ENCODE measurements at regions of chr2 and their contacts with region 1.

Region 1: GRCh38 chr2:20650880-20651730 is at the start of gene HS1BP3:
- DNase-seq: peak; percentile 83
- H3K4me3 Mint-ChIP-seq: peak within 1 kb of the TSS; percentile 77
- H3K27ac Mint-ChIP-seq: peak within 1 kb of the TSS; percentile 77
- H3K4me1 Mint-ChIP-seq: peaks cover 20% of the 10 kb centered on the region
- H3K27me3 Mint-ChIP-seq: no peaks in the 10 kb centered on the region
- total RNA-seq, gene HS1BP3: 6.0 to 6.1 TPM

Region 2: GRCh38 chr2:19347619-19348562 is 1303.2 kb before region 1 on chr2:
- CTCF ChIA-PET with region 1: no interaction called
- intact Hi-C with region 1: loop called (anchors 10 kb)
- DNase-seq: peak; percentile 94
- H3K4me3 Mint-ChIP-seq: peak overlapping the region; percentile 95
- H3K27ac Mint-ChIP-seq: peak overlapping the region; percentile 96
- H3K4me1 Mint-ChIP-seq: peaks cover 26% of the 10 kb centered on the region
- H3K27me3 Mint-ChIP-seq: peaks cover 37% of the 10 kb centered on the region

Region 3: DNA sequence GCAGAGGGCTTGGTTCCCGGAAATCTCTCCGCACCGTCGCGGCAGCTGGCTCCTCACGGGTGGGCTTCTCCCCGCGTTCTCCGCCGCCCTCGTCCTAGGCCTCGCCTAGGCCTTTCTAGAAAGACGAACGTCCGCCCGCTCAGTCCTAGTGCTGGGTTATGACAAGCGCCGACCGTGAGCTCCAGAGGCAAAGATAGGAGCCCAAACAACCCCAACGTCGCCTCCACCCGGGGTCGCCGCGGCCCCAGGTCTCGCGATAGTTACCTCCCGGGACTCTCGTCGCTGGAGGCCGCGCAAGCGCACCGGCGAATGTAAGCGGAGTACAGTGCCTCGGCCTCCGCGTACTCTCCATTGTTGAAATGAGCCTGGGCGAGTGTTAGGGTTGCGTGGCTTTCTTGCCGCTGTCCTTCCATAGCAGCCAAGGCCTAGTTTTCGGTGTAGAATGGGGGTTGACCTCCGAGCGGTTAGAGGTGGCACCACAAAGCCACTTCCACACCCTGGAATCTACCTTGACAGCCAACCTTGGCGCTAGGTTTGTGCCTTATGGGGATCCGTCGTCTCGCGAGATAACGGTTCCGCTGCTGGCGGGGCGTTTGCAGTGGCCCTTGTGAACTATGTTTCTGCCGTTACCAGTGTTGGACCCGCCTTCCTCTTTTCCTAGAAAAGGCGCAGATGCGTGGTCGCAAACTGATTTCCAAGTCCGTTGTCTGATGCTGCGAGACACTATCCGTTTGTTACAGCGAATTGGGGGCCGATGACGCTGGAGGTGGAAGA is 749.5 kb before region 1 on chr2 and contains the start of gene TTC32:
- CTCF ChIA-PET with region 1: no interaction called
- intact Hi-C with region 1: loop called (anchors 2 kb)
- DNase-seq: peak; percentile 96
- H3K4me3 Mint-ChIP-seq: peak within 1 kb of the TSS; percentile 81
- H3K27ac Mint-ChIP-seq: peak within 1 kb of the TSS; percentile 99
- H3K4me1 Mint-ChIP-seq: peaks cover 42% of the 10 kb centered on the region
- H3K27me3 Mint-ChIP-seq: peaks cover 10% of the 10 kb centered on the region
- total RNA-seq, gene TTC32: 17.0 to 19.4 TPM

Region 4: GRCh38 chr2:20350753-20351554 is 300.2 kb before region 1 on chr2 and contains the start of gene PUM2:
- CTCF ChIA-PET with region 1: interaction called, 3 read pairs
- intact Hi-C with region 1: loop called (anchors 1 kb)
- DNase-seq: peak; percentile 94
- H3K4me3 Mint-ChIP-seq: no peak within 1 kb of the TSS
- H3K27ac Mint-ChIP-seq: peak within 1 kb of the TSS; percentile 90
- H3K4me1 Mint-ChIP-seq: peaks cover 28% of the 10 kb centered on the region
- H3K27me3 Mint-ChIP-seq: no peaks in the 10 kb centered on the region
- total RNA-seq, gene PUM2: 88.4 to 96.8 TPM

Region 5: DNA sequence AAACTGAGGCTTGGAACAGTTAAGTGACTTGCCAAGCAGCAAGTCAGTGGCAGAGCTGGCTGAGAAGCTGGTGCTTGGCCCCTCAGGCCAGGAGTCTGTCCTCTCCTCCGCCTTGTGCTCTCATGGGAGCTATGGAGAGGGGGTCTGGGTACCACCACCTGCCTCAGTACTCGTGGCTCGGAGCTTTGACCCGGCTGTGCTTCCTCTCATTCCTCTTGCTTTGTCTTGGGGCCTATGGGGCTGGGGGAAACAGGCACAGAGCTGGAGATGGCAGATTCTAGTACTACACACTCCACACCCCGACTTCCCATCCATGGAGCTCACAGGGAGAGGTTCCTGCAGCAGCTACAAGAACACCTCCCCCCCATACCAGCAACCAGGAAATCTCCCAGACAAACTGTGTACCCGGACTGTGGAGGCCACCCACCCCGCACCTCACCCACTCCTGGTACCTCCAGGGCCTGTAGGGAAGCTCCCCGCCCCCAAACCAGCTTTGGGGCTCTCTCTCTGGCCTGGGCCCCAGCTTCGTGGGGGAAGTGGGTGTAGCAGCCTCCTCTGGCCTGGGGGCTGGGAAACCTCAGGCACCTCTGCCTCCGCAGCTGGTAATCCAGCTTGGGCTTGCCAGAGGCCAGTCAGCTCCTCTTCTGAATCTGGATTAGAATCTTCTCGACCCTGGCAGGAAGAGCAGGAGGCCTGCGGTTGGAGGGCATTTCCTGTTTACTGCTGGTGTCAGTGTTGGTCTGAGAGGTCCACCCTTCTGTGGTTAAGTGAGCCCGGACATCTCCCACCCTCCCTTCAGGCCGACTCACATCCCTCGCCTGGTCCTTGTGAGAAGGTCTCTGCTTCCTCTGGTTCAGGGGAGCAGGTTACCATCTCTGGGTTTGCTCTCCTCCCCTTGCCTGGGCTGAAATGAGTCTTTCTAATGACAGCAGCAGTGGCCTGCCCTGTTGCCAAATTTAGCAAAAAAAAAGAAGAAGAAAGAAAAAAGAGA is 226.5 kb before region 1 on chr2:
- CTCF ChIA-PET with region 1: interaction called, 14 read pairs
- intact Hi-C with region 1: no loop called
- DNase-seq: peak; percentile 24
- H3K4me3 Mint-ChIP-seq: no peak overlapping the region
- H3K27ac Mint-ChIP-seq: no peak overlapping the region
- H3K4me1 Mint-ChIP-seq: peaks cover 16% of the 10 kb centered on the region
- H3K27me3 Mint-ChIP-seq: no peaks in the 10 kb centered on the region

Region 6: GRCh38 chr2:20446917-20447436 is 204.1 kb before region 1 on chr2 and contains the start of gene RHOB:
- CTCF ChIA-PET with region 1: interaction called, 37 read pairs
- intact Hi-C with region 1: loop called (anchors 1 kb)
- DNase-seq: peak; percentile 91
- H3K4me3 Mint-ChIP-seq: peak within 1 kb of the TSS; percentile 76
- H3K27ac Mint-ChIP-seq: no peak within 1 kb of the TSS
- H3K4me1 Mint-ChIP-seq: peaks cover 11% of the 10 kb centered on the region
- H3K27me3 Mint-ChIP-seq: peaks cover 3% of the 10 kb centered on the region
- total RNA-seq, gene RHOB: 1.8 to 2.0 TPM

Region 7: DNA sequence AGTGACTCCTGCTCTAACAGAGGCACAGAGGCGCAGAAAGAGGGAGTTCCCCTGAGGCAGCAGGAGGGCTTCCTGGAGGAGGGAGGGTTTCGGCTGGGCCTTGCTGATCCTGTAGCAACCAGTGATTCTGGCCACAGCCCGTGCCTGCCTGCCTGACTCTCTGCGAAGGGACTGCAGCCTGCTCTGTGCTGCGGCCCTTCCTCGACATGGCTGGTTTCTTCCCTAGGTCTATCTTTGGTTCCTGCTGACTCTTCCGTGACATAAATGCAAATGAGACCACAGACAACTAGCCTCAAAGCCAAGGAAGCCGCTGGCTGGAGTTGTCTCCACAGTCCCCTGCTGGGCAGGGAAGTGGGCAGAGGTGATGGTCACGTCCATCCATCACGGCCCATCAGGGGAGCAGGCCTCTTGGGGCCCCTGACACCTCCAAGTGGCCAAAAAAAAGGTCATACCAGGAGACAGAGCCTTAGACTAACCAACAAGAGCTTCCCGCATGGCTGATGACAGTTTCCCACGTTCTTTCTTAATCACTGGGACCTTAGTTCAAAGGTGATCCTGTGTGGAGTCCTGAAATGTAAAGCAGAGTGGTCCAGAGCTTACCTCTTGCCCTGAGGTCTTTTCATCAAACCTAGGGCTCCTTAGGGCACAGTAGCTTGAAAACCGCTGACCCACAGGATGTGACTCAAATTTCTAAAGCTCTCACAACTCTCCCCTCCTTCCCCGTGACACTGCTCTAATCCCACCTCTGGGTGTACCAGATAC is 55.5 kb before region 1 on chr2:
- CTCF ChIA-PET with region 1: no interaction called
- intact Hi-C with region 1: no loop called
- DNase-seq: no peak
- H3K4me3 Mint-ChIP-seq: no peak overlapping the region
- H3K27ac Mint-ChIP-seq: no peak overlapping the region
- H3K4me1 Mint-ChIP-seq: no peaks in the 10 kb centered on the region
- H3K27me3 Mint-ChIP-seq: no peaks in the 10 kb centered on the region

Region 8: DNA sequence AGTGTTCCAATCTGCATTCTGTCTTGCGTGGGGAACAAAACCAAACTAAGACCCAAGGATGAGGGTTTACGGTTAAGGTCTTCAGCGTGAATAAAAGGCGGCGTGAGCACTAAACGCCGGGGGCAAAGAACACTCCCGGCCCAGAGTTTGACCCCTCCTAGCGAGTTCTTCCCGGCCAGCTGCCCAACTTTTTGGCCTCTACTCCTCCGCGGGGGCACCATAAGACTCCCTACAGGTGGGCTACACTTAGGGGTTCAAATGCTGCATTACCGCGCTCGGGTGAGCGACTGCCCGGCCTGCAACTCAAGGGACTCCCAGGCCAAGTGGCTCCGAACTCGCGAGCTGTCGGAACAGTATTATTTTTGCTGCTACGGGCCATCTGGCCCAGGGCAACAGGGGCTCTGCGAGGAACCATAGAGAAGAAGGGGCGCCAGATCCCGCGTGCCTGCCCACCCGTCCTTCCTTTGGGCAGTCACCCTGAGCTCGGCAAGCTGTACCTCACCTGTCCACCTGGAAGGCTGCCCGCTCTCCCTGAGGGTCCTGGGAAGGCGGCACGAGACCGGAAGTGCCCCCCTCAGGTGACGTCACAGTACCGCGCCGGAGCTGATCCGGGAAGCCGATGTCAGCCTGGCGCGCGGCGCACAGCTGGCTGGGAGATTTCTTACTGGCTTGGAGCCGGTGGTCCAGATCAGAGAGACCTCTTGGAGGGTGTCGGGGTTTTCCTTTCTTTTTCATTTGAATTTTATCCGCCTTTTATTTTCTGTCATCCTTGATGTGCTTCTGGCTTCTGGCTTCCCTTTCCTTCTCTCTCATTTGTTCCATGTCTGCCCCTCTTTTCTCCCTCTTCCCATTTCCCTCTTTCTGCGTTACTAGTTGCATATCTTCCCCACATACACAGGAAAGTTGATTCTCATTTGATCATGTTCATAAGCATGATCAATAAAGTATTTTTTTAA is 171.7 kb after region 1 on chr2 and contains the start of gene LDAH:
- CTCF ChIA-PET with region 1: interaction called, 5 read pairs
- intact Hi-C with region 1: loop called (anchors 1 kb)
- DNase-seq: peak; percentile 92
- H3K4me3 Mint-ChIP-seq: peak within 1 kb of the TSS; percentile 96
- H3K27ac Mint-ChIP-seq: peak within 1 kb of the TSS; percentile 97
- H3K4me1 Mint-ChIP-seq: peaks cover 26% of the 10 kb centered on the region
- H3K27me3 Mint-ChIP-seq: no peaks in the 10 kb centered on the region
- total RNA-seq, gene LDAH: 31.1 to 37.6 TPM

Measured in activated naive CD4-positive, alpha-beta T cell treated with anti-CD3 and anti-CD28 coated beads for 36 hours (primary cell).